ENCODE measurements at regions of chr19 and their contacts with region 1.

Region 1: GRCh38 chr19:55461259-55461973 is at the start of gene ISOC2:
- DNase-seq: peak; percentile 100
- ATAC-seq: peak; percentile 96
- H3K4me3 ChIP-seq: peak within 1 kb of the TSS; percentile 90 to 95
- H3K4me3 Mint-ChIP-seq: peak within 1 kb of the TSS; percentile 83
- H3K27ac ChIP-seq: peak within 1 kb of the TSS; percentile 70 to 87
- H3K27ac Mint-ChIP-seq: peak within 1 kb of the TSS; percentile 58
- H3K4me1 ChIP-seq: peaks cover 17% of the 10 kb centered on the region
- H3K4me1 Mint-ChIP-seq: peaks cover 19% of the 10 kb centered on the region
- H3K27me3 ChIP-seq: no peaks in the 10 kb centered on the region
- H3K27me3 Mint-ChIP-seq: no peaks in the 10 kb centered on the region
- CTCF ChIP-seq: no peak
- total RNA-seq, gene ISOC2: 1.5 to 2.1 TPM

Region 2: DNA sequence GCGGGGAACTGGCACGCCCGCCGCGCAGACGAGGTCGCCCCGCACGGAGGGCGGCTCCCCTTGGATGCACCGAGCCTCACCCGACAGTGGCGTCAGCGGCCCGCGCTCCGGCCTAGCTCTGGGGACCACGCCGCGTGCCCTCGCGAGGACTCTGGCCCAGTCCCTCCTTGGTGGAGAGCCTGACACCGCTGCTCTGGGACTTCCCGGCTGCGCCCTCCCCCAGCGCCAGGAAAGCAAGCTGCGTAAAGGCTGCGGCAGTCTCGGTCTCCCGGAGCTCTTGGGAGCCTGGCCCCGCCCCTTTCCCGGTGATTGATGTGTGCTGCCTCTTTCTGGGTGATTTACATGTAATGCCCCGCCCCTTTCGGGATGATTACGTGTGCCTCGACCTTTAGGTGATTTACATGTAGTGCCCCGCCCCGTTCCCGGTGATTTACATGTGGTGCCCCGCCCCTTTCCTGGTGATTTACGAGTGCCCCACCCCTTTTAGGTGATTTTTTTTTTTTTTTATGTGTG is 997.8 kb before region 1 on chr19 and contains the start of gene LENG9:
- CTCF ChIA-PET with region 1: no interaction called
- POLR2A ChIA-PET with region 1: no interaction called
- intact Hi-C with region 1: loop called in 1 of 2 experiments (anchors 5 kb)
- DNase-seq: peak; percentile 81 to 100 (median 91)
- ATAC-seq: peak; percentile 70
- H3K4me3 ChIP-seq: peak within 1 kb of the TSS; percentile 79 to 83
- H3K4me3 Mint-ChIP-seq: peak within 1 kb of the TSS; percentile 86
- H3K27ac ChIP-seq: peak within 1 kb of the TSS; percentile 81 to 84
- H3K27ac Mint-ChIP-seq: peak within 1 kb of the TSS; percentile 93
- H3K4me1 ChIP-seq: peaks cover 20% of the 10 kb centered on the region
- H3K4me1 Mint-ChIP-seq: peaks cover 36% of the 10 kb centered on the region
- H3K27me3 ChIP-seq: no peaks in the 10 kb centered on the region
- H3K27me3 Mint-ChIP-seq: no peaks in the 10 kb centered on the region
- CTCF ChIP-seq: no peak
- total RNA-seq, gene LENG9: 2.3 to 2.7 TPM

Region 3: DNA sequence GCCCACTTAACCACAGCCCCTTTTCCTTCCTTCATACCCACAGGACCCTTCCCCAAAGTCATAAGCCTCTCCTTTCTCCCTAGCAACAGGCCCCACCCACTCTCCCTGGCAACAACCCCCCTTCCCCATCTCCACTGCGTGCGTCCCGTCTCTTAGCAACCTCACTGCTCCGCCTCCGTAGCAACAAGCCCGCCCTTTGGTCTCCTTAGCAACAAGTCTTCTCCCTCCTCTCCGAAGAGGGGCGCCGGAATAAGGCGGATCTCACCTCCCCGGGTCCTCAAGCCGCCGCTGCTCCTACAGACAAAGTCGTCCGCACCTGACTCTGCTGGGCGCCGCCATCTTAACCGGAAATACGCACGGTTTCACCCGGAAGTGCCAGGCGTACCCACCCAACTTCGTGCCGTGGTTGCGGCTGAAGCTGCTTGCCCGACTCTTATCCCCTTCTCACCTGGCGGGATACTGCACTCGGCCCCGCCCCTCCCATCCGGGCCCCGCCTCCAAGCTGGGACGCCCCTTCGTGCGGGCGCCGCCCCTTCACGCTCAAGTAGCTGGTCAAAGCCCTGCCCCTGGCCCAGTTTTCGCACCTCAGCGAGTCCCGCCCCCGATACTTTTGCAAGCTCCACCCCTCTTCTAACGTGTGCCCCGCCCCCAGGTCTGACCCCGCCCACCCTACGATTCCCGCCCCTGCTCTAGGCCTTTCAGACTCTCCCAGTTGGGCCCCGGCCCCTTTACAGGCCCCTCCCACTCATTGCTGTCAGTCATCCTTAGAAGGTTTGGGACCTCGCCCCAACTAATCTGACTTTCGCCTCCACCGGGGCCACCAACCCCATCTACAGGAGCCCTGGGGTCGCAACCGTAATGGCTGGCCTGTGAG is 181.4 kb before region 1 on chr19 and contains the start of gene HSPBP1:
- CTCF ChIA-PET with region 1: no interaction called
- POLR2A ChIA-PET with region 1: no interaction called
- intact Hi-C with region 1: loop called in 1 of 2 experiments (anchors 1 kb)
- DNase-seq: peak; percentile 87 to 98 (median 95)
- ATAC-seq: peak; percentile 86
- H3K4me3 ChIP-seq: peak within 1 kb of the TSS; percentile 73 to 85
- H3K4me3 Mint-ChIP-seq: peak within 1 kb of the TSS; percentile 96
- H3K27ac ChIP-seq: peak within 1 kb of the TSS; percentile 89 to 90
- H3K27ac Mint-ChIP-seq: peak within 1 kb of the TSS; percentile 98
- H3K4me1 ChIP-seq: peaks cover 32% of the 10 kb centered on the region
- H3K4me1 Mint-ChIP-seq: peaks cover 44% of the 10 kb centered on the region
- H3K27me3 ChIP-seq: no peaks in the 10 kb centered on the region
- H3K27me3 Mint-ChIP-seq: no peaks in the 10 kb centered on the region
- CTCF ChIP-seq: no peak
- total RNA-seq, gene HSPBP1: 18.8 to 18.9 TPM

Region 4: GRCh38 chr19:55325172-55325571 is 136.2 kb before region 1 on chr19 and contains the start of gene TMEM150B:
- CTCF ChIA-PET with region 1: no interaction called
- POLR2A ChIA-PET with region 1: no interaction called
- intact Hi-C with region 1: no loop called
- DNase-seq: no peak
- ATAC-seq: no peak
- H3K4me3 ChIP-seq: no peak within 1 kb of the TSS
- H3K4me3 Mint-ChIP-seq: no peak within 1 kb of the TSS
- H3K27ac ChIP-seq: no peak within 1 kb of the TSS
- H3K27ac Mint-ChIP-seq: no peak within 1 kb of the TSS
- H3K4me1 ChIP-seq: no peaks in the 10 kb centered on the region
- H3K4me1 Mint-ChIP-seq: no peaks in the 10 kb centered on the region
- H3K27me3 ChIP-seq: no peaks in the 10 kb centered on the region
- H3K27me3 Mint-ChIP-seq: peaks cover 12% of the 10 kb centered on the region
- CTCF ChIP-seq: no peak
- total RNA-seq, gene TMEM150B: not detected

Region 5: GRCh38 chr19:55385740-55386529 is 75.5 kb before region 1 on chr19 and contains the start of gene RPL28:
- CTCF ChIA-PET with region 1: interaction called, 4 read pairs
- POLR2A ChIA-PET with region 1: interaction called, 4 read pairs
- intact Hi-C with region 1: loop called (anchors 1 to 2 kb)
- DNase-seq: peak; percentile 97 to 99 (median 99)
- ATAC-seq: peak; percentile 80
- H3K4me3 ChIP-seq: peak within 1 kb of the TSS; percentile 75 to 94
- H3K4me3 Mint-ChIP-seq: peak within 1 kb of the TSS; percentile 100
- H3K27ac ChIP-seq: peak within 1 kb of the TSS; percentile 95 to 97
- H3K27ac Mint-ChIP-seq: peak within 1 kb of the TSS; percentile 100
- H3K4me1 ChIP-seq: peaks cover 59% of the 10 kb centered on the region
- H3K4me1 Mint-ChIP-seq: peaks cover 75% of the 10 kb centered on the region
- H3K27me3 ChIP-seq: no peaks in the 10 kb centered on the region
- H3K27me3 Mint-ChIP-seq: no peaks in the 10 kb centered on the region
- CTCF ChIP-seq: no peak
- total RNA-seq, gene RPL28: 4,227 to 4,270 TPM

Region 6: GRCh38 chr19:55566823-55567222 is 105.4 kb after region 1 on chr19:
- CTCF ChIA-PET with region 1: no interaction called
- POLR2A ChIA-PET with region 1: no interaction called
- intact Hi-C with region 1: no loop called
- DNase-seq: no peak
- ATAC-seq: no peak
- H3K4me3 ChIP-seq: no peak overlapping the region
- H3K4me3 Mint-ChIP-seq: no peak overlapping the region
- H3K27ac ChIP-seq: no peak overlapping the region
- H3K27ac Mint-ChIP-seq: no peak overlapping the region
- H3K4me1 ChIP-seq: no peaks in the 10 kb centered on the region
- H3K4me1 Mint-ChIP-seq: no peaks in the 10 kb centered on the region
- H3K27me3 ChIP-seq: no peaks in the 10 kb centered on the region
- H3K27me3 Mint-ChIP-seq: peaks cover 16% of the 10 kb centered on the region
- CTCF ChIP-seq: no peak